AG04450 (cell line): ENCODE measurements at regions of chr2 and their contacts with region 1.

Region 1: GRCh38 chr2:1685957-1686784 is 58.1 kb downstream of the PXDN start:
- DNase-seq: no peak
- H3K4me3 ChIP-seq: no peak overlapping the region
- H3K27ac ChIP-seq: peak overlapping the region; percentile 52
- H3K27me3 ChIP-seq: no peaks in the 10 kb centered on the region
- CTCF ChIP-seq: no peak

Region 2: DNA sequence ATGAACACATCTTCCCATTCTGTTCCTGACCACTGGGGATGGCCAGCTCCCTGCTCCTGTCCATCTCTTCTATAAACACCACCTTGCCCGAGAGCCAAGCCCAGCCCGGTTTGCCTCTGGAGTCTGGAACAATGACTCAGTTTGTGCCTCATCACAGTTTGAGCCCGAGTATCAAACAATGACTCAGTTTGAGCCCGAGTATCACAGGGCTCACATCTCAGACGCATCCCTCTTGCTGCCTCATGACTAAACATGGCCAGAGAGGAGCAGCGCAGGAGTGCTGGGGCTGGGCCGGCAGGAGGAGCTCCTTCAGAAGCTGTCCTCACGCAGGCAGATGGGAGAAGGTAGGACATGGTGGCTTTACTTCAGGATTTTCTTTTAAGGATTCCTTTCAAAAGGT is 10.5 kb before region 1 on chr2:
- CTCF ChIA-PET with region 1: interaction called, 14 read pairs
- POLR2A ChIA-PET with region 1: interaction called, 4 read pairs
- DNase-seq: peak; percentile 90
- H3K4me3 ChIP-seq: no peak overlapping the region
- H3K27ac ChIP-seq: peak overlapping the region; percentile 83
- H3K27me3 ChIP-seq: no peaks in the 10 kb centered on the region
- CTCF ChIP-seq: peak; percentile 85

Region 3: DNA sequence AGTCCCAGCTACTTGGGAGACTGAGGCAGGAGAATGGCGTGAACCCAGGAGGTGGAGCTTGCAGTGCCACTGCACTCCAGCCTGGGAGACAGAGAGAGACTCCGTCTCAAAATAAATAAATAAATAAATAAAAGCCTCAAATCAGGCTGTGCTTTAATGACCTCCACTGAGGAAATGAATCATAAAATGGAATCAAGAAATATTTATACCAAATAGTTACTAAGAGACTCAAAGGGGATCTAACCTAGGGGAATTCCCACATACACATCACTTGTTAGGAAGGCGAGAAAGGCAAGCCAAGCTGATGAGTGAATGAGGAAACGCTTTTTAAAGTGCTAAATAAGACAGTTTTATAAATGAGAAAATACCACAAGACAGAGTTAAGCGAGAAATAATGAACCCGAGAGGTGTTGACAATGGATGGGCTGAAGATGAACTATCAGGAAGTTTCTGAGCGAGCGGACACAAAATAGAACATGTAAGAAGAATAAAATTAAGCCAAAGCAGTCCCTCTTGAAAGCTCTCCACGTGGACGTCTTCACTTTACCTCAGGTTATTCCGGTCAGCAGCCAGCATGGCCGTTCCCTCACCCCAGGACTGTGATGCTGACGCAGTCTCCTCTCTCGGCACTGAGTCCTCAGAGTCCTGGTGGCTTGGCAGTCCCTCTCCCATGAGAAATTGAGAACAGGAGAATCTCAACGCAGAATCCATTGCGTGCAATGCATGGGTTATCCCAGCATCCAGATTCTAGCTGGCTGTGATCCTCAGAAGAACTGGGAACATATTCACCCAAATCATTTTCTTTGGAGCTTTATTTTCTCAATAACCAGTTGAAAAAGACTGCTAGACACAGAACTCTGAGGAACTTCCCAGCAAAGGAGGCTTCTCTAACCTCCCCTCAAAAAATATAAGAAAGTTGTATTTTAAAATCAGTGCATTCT is 35.8 kb after region 1 on chr2:
- CTCF ChIA-PET with region 1: no interaction called
- POLR2A ChIA-PET with region 1: no interaction called
- DNase-seq: no peak
- H3K4me3 ChIP-seq: no peak overlapping the region
- H3K27ac ChIP-seq: peak overlapping the region; percentile 77
- H3K27me3 ChIP-seq: no peaks in the 10 kb centered on the region
- CTCF ChIP-seq: no peak

Region 4: GRCh38 chr2:2656115-2657011 is 970.2 kb after region 1 on chr2:
- CTCF ChIA-PET with region 1: no interaction called
- POLR2A ChIA-PET with region 1: no interaction called
- DNase-seq: no peak
- H3K4me3 ChIP-seq: no peak overlapping the region
- H3K27ac ChIP-seq: no peak overlapping the region
- H3K27me3 ChIP-seq: peaks cover 3% of the 10 kb centered on the region
- CTCF ChIP-seq: no peak